Left ventricle myocardium superior (tissue), 1 donor: ENCODE measurements at regions of chr9 and their contacts with region 1.

Region 1: DNA sequence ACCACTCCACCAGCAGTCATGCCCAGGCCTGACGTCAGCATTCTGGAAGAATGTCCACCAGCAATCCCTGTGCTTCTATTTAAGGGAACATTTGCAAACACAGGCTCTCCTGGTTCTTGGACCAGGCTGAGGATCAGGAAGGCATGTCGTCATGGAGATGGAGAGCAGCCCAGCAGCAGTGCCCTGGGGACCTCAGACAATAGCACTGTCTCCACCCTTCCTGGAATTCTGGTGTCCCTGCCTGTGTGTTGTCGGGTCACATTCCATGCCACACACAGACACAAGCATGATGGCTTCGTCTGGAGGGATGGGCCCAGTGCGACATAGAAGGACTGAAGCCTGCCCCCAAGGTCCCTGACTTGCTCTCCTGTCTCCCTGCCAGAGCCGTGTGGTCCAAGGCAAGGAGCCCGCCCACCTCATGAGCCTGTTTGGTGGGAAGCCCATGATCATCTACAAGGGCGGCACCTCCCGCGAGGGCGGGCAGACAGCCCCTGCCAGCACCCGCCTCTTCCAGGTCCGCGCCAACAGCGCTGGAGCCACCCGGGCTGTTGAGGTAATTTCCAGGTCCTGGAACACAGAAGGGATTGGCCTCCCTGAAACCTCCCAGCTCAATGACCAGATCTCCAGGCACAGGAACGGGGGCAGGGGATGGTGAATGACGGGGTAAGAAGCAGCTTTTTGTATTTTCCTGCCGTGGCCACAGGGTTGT is 43.8 kb downstream of the STOM start:
- DNase-seq: peak; percentile 89
- ATAC-seq: peak; percentile 89

Region 2: GRCh38 chr9:121369595-121370265 is 43.4 kb after region 1 on chr9 and contains the start of gene STOM:
- intact Hi-C with region 1: loop called (anchors 10 kb)
- DNase-seq: peak; percentile 94
- ATAC-seq: peak; percentile 80
- total RNA-seq, gene STOM: 153 TPM